SK-N-SH (cell line): ENCODE measurements at regions of chr1 and their contacts with region 1.

Region 1: GRCh38 chr1:113835642-113836307 is 23.5 kb upstream of the RSBN1 start:
- DNase-seq: peak; percentile 51
- H3K4me3 ChIP-seq: no peak overlapping the region; a peak in 1 of 4 replicates
- H3K27ac ChIP-seq: no peak overlapping the region
- H3K4me1 ChIP-seq: peaks cover 0 to 6% of the 10 kb centered on the region in 2 experiments; a peak in 1 of 4 replicates
- H3K27me3 ChIP-seq: no peaks in the 10 kb centered on the region
- CTCF ChIP-seq: peak; percentile 71
- EP300 ChIP-seq: no peak
- RAD21 ChIP-seq: peak; percentile 70

Region 2: DNA sequence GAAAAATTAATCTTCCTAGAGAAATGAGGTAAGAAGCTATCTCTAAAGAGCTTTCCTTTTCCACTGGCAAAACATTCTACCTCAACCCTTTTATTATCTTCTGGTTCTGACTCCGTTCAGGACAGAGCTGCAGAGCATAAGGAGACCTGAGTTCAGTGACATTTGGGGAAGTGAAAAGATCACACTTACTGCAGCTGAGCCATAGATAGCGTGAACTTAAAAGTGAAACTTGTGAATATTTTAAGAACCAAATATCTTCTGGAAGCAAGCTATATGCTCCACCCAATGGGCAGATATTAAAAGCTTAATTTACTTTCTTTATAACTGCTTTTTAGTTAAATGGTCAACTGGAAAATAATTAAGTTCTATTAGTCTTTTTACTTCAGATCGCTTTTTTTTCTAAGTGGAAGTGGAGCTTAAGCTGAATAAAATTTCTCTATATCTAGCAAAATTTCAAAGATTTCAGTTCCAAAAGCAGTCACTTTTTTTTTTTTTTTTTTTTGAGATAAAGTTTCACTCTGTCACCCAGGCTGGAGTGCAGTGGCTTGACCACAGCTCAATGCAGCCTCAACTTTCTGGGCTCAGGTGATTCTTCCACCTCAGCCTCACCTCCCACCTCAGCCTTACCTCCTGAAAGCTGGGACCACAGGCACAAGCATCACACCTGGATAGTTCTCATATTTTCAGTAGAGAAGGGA is 23.9 kb after region 1 on chr1:
- CTCF ChIA-PET with region 1: interaction called, 14 read pairs
- POLR2A ChIA-PET with region 1: no interaction called
- DNase-seq: no peak
- H3K4me3 ChIP-seq: no peak overlapping the region
- H3K27ac ChIP-seq: peak overlapping the region in 1 of 2 experiments; percentile 88; a peak in 2 of 4 replicates
- H3K4me1 ChIP-seq: peaks cover 0 to 29% of the 10 kb centered on the region in 2 experiments; a peak in 2 of 4 replicates
- H3K27me3 ChIP-seq: no peaks in the 10 kb centered on the region
- CTCF ChIP-seq: no peak
- EP300 ChIP-seq: no peak
- RAD21 ChIP-seq: no peak

Region 3: DNA sequence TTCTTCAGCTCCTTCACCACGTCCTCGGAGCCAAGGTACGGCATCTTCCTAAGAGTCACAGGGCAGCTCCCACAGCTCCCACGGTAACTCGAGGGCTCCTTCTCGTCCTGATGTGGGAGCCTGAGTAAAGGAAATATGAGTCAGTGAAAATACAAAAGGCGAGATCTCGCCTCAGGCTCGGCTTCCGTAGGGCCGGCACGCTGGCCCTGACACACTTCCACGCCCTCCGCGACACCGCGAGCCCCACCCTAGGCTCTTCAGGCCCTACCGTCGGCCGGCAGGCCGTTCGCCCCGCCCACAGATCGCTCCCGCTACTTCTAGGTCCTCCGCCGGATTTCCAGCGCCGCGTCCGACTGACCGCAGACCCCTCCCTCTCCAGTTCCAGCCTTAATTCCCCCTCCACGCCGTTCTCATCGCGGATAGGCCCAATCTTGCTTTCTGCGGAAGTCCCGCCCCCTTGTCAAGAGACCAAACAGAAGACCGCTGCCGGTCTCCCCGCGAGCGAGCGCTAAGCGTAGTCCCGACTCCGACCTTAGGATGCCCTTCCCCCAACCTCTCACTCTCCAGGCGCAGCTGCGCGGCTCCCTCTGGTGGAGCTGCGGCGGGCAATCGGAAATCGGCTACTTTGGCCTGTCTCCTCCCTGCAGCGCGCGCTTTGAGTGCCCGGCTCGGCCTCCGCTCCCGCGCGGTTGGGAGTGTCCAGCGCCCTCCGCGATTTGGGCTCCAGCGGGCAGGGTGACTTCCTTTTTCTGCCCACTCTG is 69.1 kb after region 1 on chr1 and contains the starts of genes AP4B1 and DCLRE1B:
- CTCF ChIA-PET with region 1: interaction called, 11 read pairs
- POLR2A ChIA-PET with region 1: no interaction called
- DNase-seq: peak; percentile 95
- H3K4me3 ChIP-seq: peak within 1 kb of the TSS; percentile 62 to 84
- H3K27ac ChIP-seq: peak within 1 kb of the TSS; percentile 90 to 93
- H3K4me1 ChIP-seq: peaks cover 0 to 11% of the 10 kb centered on the region in 2 experiments; a peak in 2 of 4 replicates
- H3K27me3 ChIP-seq: no peaks in the 10 kb centered on the region
- CTCF ChIP-seq: peak; percentile 66
- EP300 ChIP-seq: peak; percentile 31 to 76; a peak in 3 of 4 replicates
- RAD21 ChIP-seq: peak; percentile 64
- polyA plus RNA-seq, gene AP4B1: 11.5 and 16.8 TPM in 2 replicates
- polyA plus RNA-seq, gene DCLRE1B: 3.0 and 3.3 TPM in 2 replicates